Tibial artery (tissue), 4 donors: ENCODE measurements at regions of chr3 and their contacts with region 1.

Region 1: GRCh38 chr3:184777336-184778004 is 34.5 kb upstream of the VPS8 start:
- DNase-seq: peak; percentile 93 to 96
- H3K4me3 ChIP-seq: no peak overlapping the region
- H3K27ac ChIP-seq: no peak overlapping the region
- H3K4me1 ChIP-seq: no peaks in the 10 kb centered on the region
- H3K27me3 ChIP-seq: peaks cover 0 to 24% of the 10 kb centered on the region in 2 donors
- CTCF ChIP-seq: peak; percentile 75 to 97

Region 2: GRCh38 chr3:184275961-184276910 is 501.2 kb before region 1 on chr3 and contains the start of gene ECE2:
- intact Hi-C with region 1: no loop called
- DNase-seq: no peak
- H3K4me3 ChIP-seq: no peak within 1 kb of the TSS
- H3K27ac ChIP-seq: no peak within 1 kb of the TSS
- H3K4me1 ChIP-seq: peaks cover 0 to 6% (median 1%) of the 10 kb centered on the region in 4 donors
- H3K27me3 ChIP-seq: peaks cover 0 to 44% of the 10 kb centered on the region in 2 donors
- CTCF ChIP-seq: no peak

Region 3: GRCh38 chr3:184561061-184561912 is 216.2 kb before region 1 on chr3 and contains the start of gene EPHB3:
- intact Hi-C with region 1: loop called (anchors 1 kb)
- DNase-seq: peak; percentile 100
- H3K4me3 ChIP-seq: peak within 1 kb of the TSS; percentile 60 to 66
- H3K27ac ChIP-seq: peak within 1 kb of the TSS; percentile 52 to 73
- H3K4me1 ChIP-seq: peaks cover 0 to 46% (median 28%) of the 10 kb centered on the region in 4 donors
- H3K27me3 ChIP-seq: no peaks in the 10 kb centered on the region
- CTCF ChIP-seq: peak; percentile 97 to 99

Region 4: GRCh38 chr3:184727357-184728009 is 50.0 kb before region 1 on chr3:
- intact Hi-C with region 1: loop called (anchors 5 kb)
- DNase-seq: peak in 1 of 2 donors; percentile 64
- H3K4me3 ChIP-seq: no peak overlapping the region
- H3K27ac ChIP-seq: no peak overlapping the region
- H3K4me1 ChIP-seq: no peaks in the 10 kb centered on the region
- H3K27me3 ChIP-seq: no peaks in the 10 kb centered on the region
- CTCF ChIP-seq: peak; percentile 57 to 62